ENCODE measurements at regions of chr7 and their contacts with region 1.

Region 1: DNA sequence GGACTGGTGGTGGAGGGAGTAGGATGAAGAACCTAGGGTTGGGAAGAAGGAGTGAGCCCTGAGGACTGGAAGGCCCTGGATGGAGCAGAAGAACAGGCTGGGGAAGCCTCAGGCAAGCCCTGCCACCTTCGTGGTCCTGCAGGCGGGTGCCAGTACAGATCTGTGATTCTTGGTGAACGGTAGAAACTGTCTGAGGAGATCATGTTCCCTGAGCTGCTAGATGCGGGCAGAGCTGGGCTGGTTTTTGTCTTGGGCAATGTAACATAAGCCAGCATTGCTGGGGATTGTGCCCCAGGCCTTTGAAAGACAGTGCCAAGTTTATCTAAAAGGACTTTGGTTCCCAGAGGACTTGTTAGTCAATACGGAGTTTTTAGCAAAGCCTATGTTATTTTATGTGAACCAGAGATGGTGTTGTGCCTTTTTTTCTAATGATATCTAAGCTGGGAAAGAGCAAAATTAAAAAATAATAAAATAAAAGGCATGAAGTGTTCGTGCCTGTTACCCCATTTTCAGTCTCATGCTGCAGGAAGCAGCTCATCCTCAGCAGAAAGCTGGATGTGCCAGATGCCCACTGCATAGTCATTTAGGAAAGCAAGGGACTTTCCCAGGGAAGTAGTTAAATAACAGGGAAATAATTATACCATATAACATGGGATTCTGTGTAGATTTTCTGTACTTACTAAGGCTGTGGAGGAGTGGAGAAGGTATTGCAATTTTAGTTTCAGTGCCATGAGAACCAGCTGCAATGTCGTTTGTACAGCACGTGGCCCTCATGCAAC is 24.4 kb upstream of the FIGNL1 start:
- DNase-seq: no peak
- H3K4me3 ChIP-seq: no peak overlapping the region
- H3K4me3 Mint-ChIP-seq: no peak overlapping the region
- H3K27ac ChIP-seq: no peak overlapping the region
- H3K27ac Mint-ChIP-seq: peak overlapping the region in 1 of 7 donors; percentile 4
- H3K4me1 ChIP-seq: no peaks in the 10 kb centered on the region
- H3K4me1 Mint-ChIP-seq: no peaks in the 10 kb centered on the region
- H3K27me3 ChIP-seq: no peaks in the 10 kb centered on the region
- H3K27me3 Mint-ChIP-seq: peaks cover 0 to 7% (median 2%) of the 10 kb centered on the region in 3 donors
- CTCF ChIP-seq: no peak

Region 2: GRCh38 chr7:50431316-50431715 is 43.3 kb before region 1 on chr7:
- intact Hi-C with region 1: no loop called
- DNase-seq: no peak
- H3K4me3 ChIP-seq: no peak overlapping the region
- H3K4me3 Mint-ChIP-seq: no peak overlapping the region
- H3K27ac ChIP-seq: no peak overlapping the region
- H3K27ac Mint-ChIP-seq: no peak overlapping the region
- H3K4me1 ChIP-seq: peaks cover 7 to 9% of the 10 kb centered on the region in 2 donors
- H3K4me1 Mint-ChIP-seq: peaks cover 6% of the 10 kb centered on the region
- H3K27me3 ChIP-seq: no peaks in the 10 kb centered on the region
- H3K27me3 Mint-ChIP-seq: peaks cover 0 to 4% (median 2%) of the 10 kb centered on the region in 3 donors
- CTCF ChIP-seq: no peak

Region 3: DNA sequence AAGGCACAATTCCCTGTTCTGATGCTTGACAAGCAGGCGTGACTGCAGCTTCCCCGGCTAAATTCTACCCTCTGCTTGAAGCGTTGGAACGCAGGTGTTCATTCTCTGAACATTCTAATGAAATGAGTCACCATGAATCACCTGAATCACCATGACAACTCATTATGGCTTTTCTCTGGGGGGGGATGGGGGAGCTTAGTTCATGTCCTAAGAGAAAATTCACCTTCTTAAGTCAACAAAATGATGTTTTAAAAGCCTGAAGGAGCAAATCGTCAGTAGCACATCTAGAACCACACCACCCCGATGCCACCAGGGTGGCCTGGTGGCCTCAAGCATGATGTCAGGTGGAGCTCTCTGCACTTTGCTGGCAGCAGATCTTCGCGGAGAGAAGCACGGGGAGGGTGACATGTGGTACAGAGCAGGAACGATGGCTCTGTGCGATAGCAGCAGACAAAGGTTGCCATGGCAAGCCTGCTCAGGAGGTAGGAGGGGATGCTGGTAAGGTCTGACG is 56.9 kb after region 1 on chr7:
- intact Hi-C with region 1: no loop called
- DNase-seq: no peak
- H3K4me3 ChIP-seq: no peak overlapping the region
- H3K4me3 Mint-ChIP-seq: no peak overlapping the region
- H3K27ac ChIP-seq: no peak overlapping the region
- H3K27ac Mint-ChIP-seq: no peak overlapping the region
- H3K4me1 ChIP-seq: peaks cover 5% of the 10 kb centered on the region in 2 donors
- H3K4me1 Mint-ChIP-seq: peaks cover 11% of the 10 kb centered on the region
- H3K27me3 ChIP-seq: no peaks in the 10 kb centered on the region
- H3K27me3 Mint-ChIP-seq: peaks cover 1 to 3% (median 3%) of the 10 kb centered on the region in 3 donors
- CTCF ChIP-seq: no peak

Region 4: GRCh38 chr7:50679218-50680007 is 204.8 kb after region 1 on chr7:
- intact Hi-C with region 1: loop called (anchors 2 to 5 kb)
- DNase-seq: peak; percentile 12 to 33 (median 16)
- H3K4me3 ChIP-seq: no peak overlapping the region
- H3K4me3 Mint-ChIP-seq: no peak overlapping the region
- H3K27ac ChIP-seq: no peak overlapping the region
- H3K27ac Mint-ChIP-seq: no peak overlapping the region
- H3K4me1 ChIP-seq: peaks cover 6 to 12% of the 10 kb centered on the region in 2 donors
- H3K4me1 Mint-ChIP-seq: peaks cover 16% of the 10 kb centered on the region
- H3K27me3 ChIP-seq: no peaks in the 10 kb centered on the region
- H3K27me3 Mint-ChIP-seq: peaks cover 0 to 2% (median 0%) of the 10 kb centered on the region in 3 donors
- CTCF ChIP-seq: peak; percentile 63

Region 5: DNA sequence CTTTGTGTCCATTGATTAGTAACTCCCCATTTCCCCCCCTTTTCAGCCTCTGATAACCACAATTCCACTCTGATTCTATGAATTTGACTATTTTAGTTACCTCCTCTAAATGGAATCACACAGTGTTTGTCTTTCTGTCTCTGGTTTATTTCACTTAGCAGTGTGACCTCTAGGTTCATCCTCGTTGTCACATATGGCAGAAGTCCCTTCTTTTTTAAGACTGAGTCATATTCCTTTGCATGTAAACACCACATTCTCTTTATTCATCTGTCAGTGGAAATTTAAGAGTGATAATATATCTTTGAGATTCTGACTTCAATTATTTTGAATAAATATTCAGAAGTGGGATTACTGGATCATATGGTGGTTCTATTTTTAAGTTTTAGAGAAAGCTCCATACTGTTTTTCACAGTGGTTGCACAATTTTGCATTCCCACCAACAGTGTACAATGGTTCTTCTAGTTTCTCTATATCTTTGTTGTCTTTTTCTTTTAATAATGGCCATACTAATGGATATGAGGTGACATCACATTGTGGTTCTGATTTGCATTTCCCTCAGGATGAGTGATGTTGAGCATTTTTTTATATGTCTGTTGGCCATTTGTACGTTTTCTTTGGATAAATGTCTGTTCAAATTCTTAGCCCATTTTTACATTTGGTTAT is 434.2 kb after region 1 on chr7:
- intact Hi-C with region 1: no loop called
- DNase-seq: no peak
- H3K4me3 ChIP-seq: no peak overlapping the region
- H3K4me3 Mint-ChIP-seq: no peak overlapping the region
- H3K27ac ChIP-seq: no peak overlapping the region
- H3K27ac Mint-ChIP-seq: no peak overlapping the region
- H3K4me1 ChIP-seq: no peaks in the 10 kb centered on the region
- H3K4me1 Mint-ChIP-seq: no peaks in the 10 kb centered on the region
- H3K27me3 ChIP-seq: no peaks in the 10 kb centered on the region
- H3K27me3 Mint-ChIP-seq: no peaks in the 10 kb centered on the region
- CTCF ChIP-seq: no peak